AG04450 (cell line): ENCODE measurements at regions of chr14 and their contacts with region 1.

Region 1: GRCh38 chr14:49898485-49898884 is 5.6 kb downstream of the ARF6 start:
- DNase-seq: no peak
- H3K4me3 ChIP-seq: no peak overlapping the region
- H3K27ac ChIP-seq: no peak overlapping the region
- H3K27me3 ChIP-seq: no peaks in the 10 kb centered on the region
- CTCF ChIP-seq: no peak

Region 2: GRCh38 chr14:49849213-49849847 is 49.2 kb before region 1 on chr14:
- CTCF ChIA-PET with region 1: no interaction called
- POLR2A ChIA-PET with region 1: no interaction called
- DNase-seq: no peak
- H3K4me3 ChIP-seq: no peak overlapping the region
- H3K27ac ChIP-seq: no peak overlapping the region
- H3K27me3 ChIP-seq: no peaks in the 10 kb centered on the region
- CTCF ChIP-seq: no peak

Region 3: DNA sequence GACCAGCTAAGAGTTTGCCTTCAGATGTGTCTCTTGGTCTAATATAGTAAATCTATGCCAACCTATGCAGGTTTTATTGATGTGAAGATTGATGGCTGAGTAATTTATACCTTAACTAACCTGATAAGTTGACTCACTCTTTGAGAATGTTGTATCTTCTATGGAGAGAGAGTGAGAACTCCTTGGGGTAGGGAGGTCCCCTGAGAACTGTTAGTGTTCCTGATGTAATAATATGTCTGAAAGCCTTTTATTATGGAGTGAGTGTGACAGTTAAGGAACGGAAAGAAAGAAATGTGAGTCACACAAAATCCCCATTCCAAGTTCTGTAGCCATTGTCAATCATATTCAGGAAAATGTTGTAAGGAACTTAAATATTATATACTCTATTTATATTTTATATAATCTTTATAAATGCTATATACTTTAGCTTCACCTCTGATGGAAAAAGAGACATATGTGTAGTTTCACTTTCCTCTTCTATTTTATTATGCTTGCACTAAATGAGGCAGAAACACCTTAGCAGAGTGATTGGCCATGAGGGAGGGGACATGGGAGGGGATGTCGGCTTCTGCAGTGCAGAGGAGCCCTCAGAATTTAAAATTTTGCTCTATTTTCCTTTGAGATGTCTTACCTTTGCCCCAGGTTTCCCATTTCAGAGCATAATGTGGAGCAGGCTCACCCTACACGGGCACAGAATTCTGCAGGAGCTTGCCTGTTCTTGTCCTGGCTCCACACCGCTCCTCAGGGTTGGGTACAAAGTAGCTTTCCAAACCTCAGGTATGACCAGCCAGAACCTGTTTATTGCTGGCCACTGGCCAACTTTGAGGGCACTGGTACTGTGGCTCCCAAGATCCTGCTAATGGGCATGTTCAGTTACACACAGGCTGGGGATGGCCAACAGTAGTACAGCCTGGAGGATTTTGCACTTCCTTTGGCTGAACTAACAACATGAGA is 52.1 kb after region 1 on chr14:
- CTCF ChIA-PET with region 1: no interaction called
- POLR2A ChIA-PET with region 1: interaction called, 10 read pairs
- DNase-seq: no peak
- H3K4me3 ChIP-seq: no peak overlapping the region
- H3K27ac ChIP-seq: no peak overlapping the region
- H3K27me3 ChIP-seq: no peaks in the 10 kb centered on the region
- CTCF ChIP-seq: no peak